Calu3 (cell line): ENCODE measurements at regions of chr10 and their contacts with region 1.

Region 1: DNA sequence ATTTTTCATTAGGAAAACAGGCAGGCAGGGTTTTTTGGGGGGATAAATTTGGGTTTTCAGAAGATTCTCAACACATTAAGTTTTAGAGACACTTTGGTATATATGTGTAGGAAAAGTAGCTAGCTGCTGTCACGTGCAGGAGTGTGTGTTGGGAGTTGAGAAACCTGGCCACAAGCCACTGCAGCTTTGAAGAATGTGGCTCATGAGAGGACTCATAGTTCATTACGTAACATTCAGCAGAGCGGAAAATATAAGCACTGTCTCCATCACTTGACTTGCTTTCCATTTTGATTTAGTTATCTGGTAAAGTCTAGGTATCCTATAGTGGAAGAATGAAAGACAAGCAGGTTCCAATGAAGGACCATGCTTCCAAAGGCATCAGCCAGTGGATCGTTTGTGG is 31.2 kb downstream of the SMNDC1 start:
- DNase-seq: no peak
- H3K4me3 Mint-ChIP-seq: no peak overlapping the region
- H3K27ac Mint-ChIP-seq: peak overlapping the region; percentile 13
- H3K4me1 Mint-ChIP-seq: peaks cover 25% of the 10 kb centered on the region
- H3K27me3 Mint-ChIP-seq: no peaks in the 10 kb centered on the region
- CTCF ChIP-seq: no peak

Region 2: GRCh38 chr10:110225756-110226542 is 47.5 kb before region 1 on chr10:
- CTCF ChIA-PET with region 1: no interaction called
- intact Hi-C with region 1: no loop called
- DNase-seq: peak; percentile 82
- H3K4me3 Mint-ChIP-seq: peak overlapping the region; percentile 76
- H3K27ac Mint-ChIP-seq: peak overlapping the region; percentile 82
- H3K4me1 Mint-ChIP-seq: peaks cover 16% of the 10 kb centered on the region
- H3K27me3 Mint-ChIP-seq: no peaks in the 10 kb centered on the region
- CTCF ChIP-seq: no peak

Region 3: GRCh38 chr10:110239893-110240292 is 33.6 kb before region 1 on chr10:
- CTCF ChIA-PET with region 1: no interaction called
- intact Hi-C with region 1: loop called (anchors 5 kb)
- DNase-seq: no peak
- H3K4me3 Mint-ChIP-seq: no peak overlapping the region
- H3K27ac Mint-ChIP-seq: no peak overlapping the region
- H3K4me1 Mint-ChIP-seq: no peaks in the 10 kb centered on the region
- H3K27me3 Mint-ChIP-seq: no peaks in the 10 kb centered on the region
- CTCF ChIP-seq: no peak